CD4-positive, alpha-beta memory T cell (primary cell): ENCODE measurements at regions of chr17 and their contacts with region 1.

Region 1: DNA sequence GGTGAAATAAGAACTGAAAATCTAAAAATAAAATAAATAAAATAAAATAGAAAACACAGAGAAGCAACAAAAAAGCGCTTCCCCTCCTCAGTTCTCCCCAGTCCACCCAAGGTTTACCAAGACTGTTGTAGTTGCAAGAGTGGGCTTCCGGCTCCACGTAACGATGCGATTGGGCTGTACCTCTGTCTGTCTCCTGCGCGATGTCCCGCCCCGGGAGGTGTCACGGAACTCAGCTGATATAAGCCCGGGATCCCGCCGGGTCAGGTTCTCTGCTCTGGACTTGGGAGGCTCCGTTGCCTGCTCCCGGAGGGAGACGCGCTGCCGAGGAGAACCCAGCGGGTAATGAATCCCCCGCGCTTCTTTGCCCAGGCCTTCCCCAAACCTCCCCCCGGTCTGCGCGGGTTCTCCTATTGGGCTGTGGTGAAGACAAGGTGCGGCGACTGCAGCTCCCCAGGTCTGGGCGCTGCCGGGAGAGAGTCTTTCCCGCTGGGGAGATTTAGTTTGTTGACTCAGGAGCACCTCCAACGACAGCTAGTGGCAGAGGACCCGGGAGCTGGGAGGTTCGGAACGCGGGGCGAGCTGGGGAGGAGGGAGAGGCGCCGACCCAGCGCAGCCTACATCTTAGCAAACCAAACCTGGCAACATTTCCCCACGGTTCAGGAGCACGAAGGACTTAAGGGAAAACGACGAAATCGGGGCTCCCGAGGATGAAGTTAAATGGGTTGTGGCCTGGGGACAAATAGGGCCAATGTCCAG is at the start of gene SLFN5:
- DNase-seq: peak; percentile 92 to 95 (median 94)
- H3K4me3 ChIP-seq: peak within 1 kb of the TSS; percentile 87 to 99
- H3K4me3 Mint-ChIP-seq: peak within 1 kb of the TSS; percentile 98 to 100 (median 99)
- H3K27ac ChIP-seq: peak within 1 kb of the TSS; percentile 93
- H3K27ac Mint-ChIP-seq: peak within 1 kb of the TSS; percentile 97 to 100 (median 99)
- H3K4me1 ChIP-seq: peaks cover 53% of the 10 kb centered on the region
- H3K4me1 Mint-ChIP-seq: peaks cover 40 to 87% (median 55%) of the 10 kb centered on the region in 4 donors
- H3K27me3 ChIP-seq: no peaks in the 10 kb centered on the region
- H3K27me3 Mint-ChIP-seq: no peaks in the 10 kb centered on the region
- total RNA-seq, gene SLFN5: 182 to 188 TPM

Region 2: DNA sequence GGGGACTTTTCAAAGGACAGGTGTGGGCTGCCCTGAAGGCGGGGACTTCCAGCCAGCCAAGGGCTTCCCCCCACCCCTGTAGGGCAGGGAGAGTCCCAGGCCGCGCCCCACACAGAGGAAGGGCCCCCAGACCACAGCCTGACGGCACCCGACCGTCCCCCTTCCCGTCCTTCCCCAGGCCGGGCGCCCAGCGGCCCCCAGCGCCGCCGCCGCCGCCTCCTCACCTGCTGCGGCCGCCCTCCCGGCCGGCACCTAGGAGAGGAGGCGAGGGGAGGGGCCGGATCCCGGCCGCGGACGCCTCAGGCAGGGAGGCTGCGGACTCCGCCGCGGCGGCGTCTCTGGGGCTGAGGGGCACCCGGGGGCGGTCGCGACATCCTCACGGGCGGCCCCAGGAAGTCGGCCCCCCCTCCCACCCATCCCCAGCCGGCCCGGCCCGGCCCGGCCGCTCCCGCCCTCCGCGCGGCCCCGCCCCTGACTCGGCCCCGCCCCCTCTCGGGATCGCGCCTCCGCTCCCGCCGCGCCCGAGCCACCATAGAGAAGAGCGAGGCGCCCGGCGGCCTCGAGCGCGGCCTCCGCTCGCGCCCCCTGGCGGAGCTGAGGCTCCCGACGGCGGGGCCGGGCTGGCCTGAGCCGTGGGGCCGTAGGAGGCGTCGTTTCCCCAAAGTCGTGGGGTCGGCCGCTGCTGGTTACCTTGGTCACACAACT is 153.9 kb before region 1 on chr17:
- CTCF ChIA-PET with region 1: no interaction called
- POLR2A ChIA-PET with region 1: interaction called, 3 read pairs
- intact Hi-C with region 1: loop called (anchors 1 kb)
- DNase-seq: peak; percentile 86 to 95 (median 88)
- H3K4me3 ChIP-seq: peak overlapping the region; percentile 76 to 96
- H3K4me3 Mint-ChIP-seq: peak overlapping the region; percentile 93 to 99 (median 96)
- H3K27ac ChIP-seq: peak overlapping the region; percentile 97
- H3K27ac Mint-ChIP-seq: peak overlapping the region; percentile 92 to 99 (median 97)
- H3K4me1 ChIP-seq: peaks cover 42% of the 10 kb centered on the region
- H3K4me1 Mint-ChIP-seq: peaks cover 28 to 55% (median 40%) of the 10 kb centered on the region in 4 donors
- H3K27me3 ChIP-seq: no peaks in the 10 kb centered on the region
- H3K27me3 Mint-ChIP-seq: no peaks in the 10 kb centered on the region

Region 3: DNA sequence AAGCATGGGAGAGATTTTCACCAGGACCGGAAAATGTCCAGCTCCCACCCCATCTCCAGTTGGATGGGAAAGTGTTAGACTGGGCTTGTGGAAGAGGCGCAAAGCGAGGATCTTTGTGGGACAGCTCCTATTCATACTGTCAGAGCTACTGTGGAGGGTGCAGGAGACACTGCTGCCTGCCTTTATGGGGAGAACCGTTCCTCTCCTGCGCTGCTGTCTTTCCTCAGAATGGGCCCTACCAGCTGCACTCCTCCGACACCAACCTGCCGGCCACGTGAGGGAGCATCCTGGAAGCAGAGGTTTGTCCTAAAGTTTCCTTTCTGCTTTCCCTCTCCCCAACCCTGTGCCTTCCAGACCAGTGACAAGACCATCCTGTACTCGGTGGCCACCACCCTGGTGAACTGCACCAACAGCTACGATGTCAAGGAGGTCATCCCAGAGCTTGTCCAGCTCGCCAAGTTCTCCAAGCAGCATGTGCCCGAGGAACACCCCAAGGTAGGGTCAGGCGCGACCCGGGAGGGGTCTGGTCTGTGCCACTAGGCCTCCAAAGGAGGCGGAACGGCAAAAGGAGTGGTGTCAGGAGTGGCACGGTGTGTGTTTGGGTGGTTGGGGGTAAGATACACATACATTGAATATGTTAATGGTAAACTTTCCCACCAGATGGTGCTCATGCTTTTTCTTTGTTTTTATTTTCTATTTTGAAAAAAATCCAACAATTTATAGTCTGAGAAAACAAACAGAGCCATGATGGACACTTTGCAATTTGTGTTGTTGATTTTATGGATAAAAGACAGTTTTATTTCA is 71.8 kb before region 1 on chr17:
- CTCF ChIA-PET with region 1: interaction called, 13 read pairs
- POLR2A ChIA-PET with region 1: interaction called, 217 read pairs
- intact Hi-C with region 1: loop called (anchors 1 kb)
- DNase-seq: peak; percentile 41 to 75 (median 72)
- H3K4me3 ChIP-seq: peak overlapping the region in 1 of 2 donors; percentile 18
- H3K4me3 Mint-ChIP-seq: peak overlapping the region; percentile 51 to 81 (median 68)
- H3K27ac ChIP-seq: no peak overlapping the region
- H3K27ac Mint-ChIP-seq: peak overlapping the region; percentile 82 to 93 (median 91)
- H3K4me1 ChIP-seq: peaks cover 41% of the 10 kb centered on the region
- H3K4me1 Mint-ChIP-seq: peaks cover 32 to 60% (median 42%) of the 10 kb centered on the region in 4 donors
- H3K27me3 ChIP-seq: no peaks in the 10 kb centered on the region
- H3K27me3 Mint-ChIP-seq: no peaks in the 10 kb centered on the region

Region 4: DNA sequence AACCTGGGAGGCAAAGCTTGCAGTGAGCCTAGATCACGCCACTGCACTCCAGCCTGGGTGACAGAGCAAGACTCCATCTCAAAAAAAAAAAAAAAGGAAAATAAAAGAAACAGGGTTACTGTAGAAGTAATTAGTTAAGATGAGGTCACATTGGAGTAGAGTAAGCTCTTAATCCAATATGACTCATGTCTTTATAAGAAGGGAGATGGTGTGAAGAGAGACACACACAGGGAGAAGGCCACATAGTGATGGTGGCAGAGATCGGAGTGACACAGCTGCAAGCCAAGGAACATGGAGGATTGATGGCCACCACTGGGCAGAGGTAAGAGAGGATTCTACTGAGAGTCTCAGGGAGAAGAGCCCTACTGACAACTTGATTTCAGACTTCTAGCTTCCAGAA is 15.4 kb before region 1 on chr17:
- CTCF ChIA-PET with region 1: interaction called, 12 read pairs
- POLR2A ChIA-PET with region 1: interaction called, 256 read pairs
- intact Hi-C with region 1: no loop called
- DNase-seq: no peak
- H3K4me3 ChIP-seq: no peak overlapping the region
- H3K4me3 Mint-ChIP-seq: no peak overlapping the region
- H3K27ac ChIP-seq: no peak overlapping the region
- H3K27ac Mint-ChIP-seq: peak overlapping the region in 1 of 7 donors; percentile 29
- H3K4me1 ChIP-seq: peaks cover 17% of the 10 kb centered on the region
- H3K4me1 Mint-ChIP-seq: peaks cover 31 to 52% (median 39%) of the 10 kb centered on the region in 4 donors
- H3K27me3 ChIP-seq: no peaks in the 10 kb centered on the region
- H3K27me3 Mint-ChIP-seq: no peaks in the 10 kb centered on the region

Region 5: GRCh38 chr17:35373534-35373983 is 130.6 kb after region 1 on chr17 and contains the start of gene SLFN11:
- CTCF ChIA-PET with region 1: no interaction called
- POLR2A ChIA-PET with region 1: interaction called, 29 read pairs
- intact Hi-C with region 1: loop called (anchors 2 kb)
- DNase-seq: peak; percentile 83 to 91 (median 83)
- H3K4me3 ChIP-seq: peak within 1 kb of the TSS; percentile 54 to 85
- H3K4me3 Mint-ChIP-seq: peak within 1 kb of the TSS; percentile 96 to 100 (median 99)
- H3K27ac ChIP-seq: peak within 1 kb of the TSS; percentile 98
- H3K27ac Mint-ChIP-seq: peak within 1 kb of the TSS; percentile 99 to 100 (median 100)
- H3K4me1 ChIP-seq: peaks cover 45% of the 10 kb centered on the region
- H3K4me1 Mint-ChIP-seq: peaks cover 32 to 71% (median 50%) of the 10 kb centered on the region in 4 donors
- H3K27me3 ChIP-seq: no peaks in the 10 kb centered on the region
- H3K27me3 Mint-ChIP-seq: no peaks in the 10 kb centered on the region
- total RNA-seq, gene SLFN11: 72.4 to 74.2 TPM

Region 6: DNA sequence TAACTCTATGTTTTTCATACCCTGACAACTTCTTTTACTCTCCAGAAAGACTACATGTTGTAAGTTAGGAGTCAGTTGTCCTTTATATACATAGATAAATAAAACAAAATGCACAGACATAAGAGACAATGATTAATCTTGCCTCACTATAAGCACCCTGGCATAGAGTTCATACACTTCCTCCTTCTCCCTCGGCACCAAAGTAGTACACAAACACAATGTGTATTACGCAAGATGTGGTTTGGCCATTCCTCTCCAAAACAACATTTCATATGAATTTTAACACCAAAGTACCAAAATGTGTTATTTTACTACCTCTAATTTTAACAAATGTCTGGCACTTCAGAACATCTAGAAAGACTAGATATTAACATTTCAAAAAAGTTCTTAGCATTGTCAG is 147.7 kb after region 1 on chr17:
- CTCF ChIA-PET with region 1: no interaction called
- POLR2A ChIA-PET with region 1: no interaction called
- intact Hi-C with region 1: no loop called
- DNase-seq: no peak
- H3K4me3 ChIP-seq: no peak overlapping the region
- H3K4me3 Mint-ChIP-seq: no peak overlapping the region
- H3K27ac ChIP-seq: no peak overlapping the region
- H3K27ac Mint-ChIP-seq: no peak overlapping the region
- H3K4me1 ChIP-seq: no peaks in the 10 kb centered on the region
- H3K4me1 Mint-ChIP-seq: peaks cover 0 to 5% (median 0%) of the 10 kb centered on the region in 4 donors
- H3K27me3 ChIP-seq: no peaks in the 10 kb centered on the region
- H3K27me3 Mint-ChIP-seq: peaks cover 2 to 4% of the 10 kb centered on the region in 2 donors

Region 7: GRCh38 chr17:35578197-35578928 is 335.4 kb after region 1 on chr17 and contains the start of gene PEX12:
- CTCF ChIA-PET with region 1: no interaction called
- POLR2A ChIA-PET with region 1: interaction called, 28 read pairs
- intact Hi-C with region 1: no loop called
- DNase-seq: peak; percentile 87 to 95 (median 91)
- H3K4me3 ChIP-seq: peak within 1 kb of the TSS; percentile 81 to 90
- H3K4me3 Mint-ChIP-seq: peak within 1 kb of the TSS; percentile 95 to 99 (median 97)
- H3K27ac ChIP-seq: peak within 1 kb of the TSS; percentile 89
- H3K27ac Mint-ChIP-seq: peak within 1 kb of the TSS; percentile 97 to 100 (median 99)
- H3K4me1 ChIP-seq: peaks cover 24% of the 10 kb centered on the region
- H3K4me1 Mint-ChIP-seq: peaks cover 6 to 34% (median 26%) of the 10 kb centered on the region in 4 donors
- H3K27me3 ChIP-seq: no peaks in the 10 kb centered on the region
- H3K27me3 Mint-ChIP-seq: no peaks in the 10 kb centered on the region
- total RNA-seq, gene PEX12: 8.2 to 8.5 TPM